ENCODE measurements at regions of chr6 and their contacts with region 1.

Region 1: DNA sequence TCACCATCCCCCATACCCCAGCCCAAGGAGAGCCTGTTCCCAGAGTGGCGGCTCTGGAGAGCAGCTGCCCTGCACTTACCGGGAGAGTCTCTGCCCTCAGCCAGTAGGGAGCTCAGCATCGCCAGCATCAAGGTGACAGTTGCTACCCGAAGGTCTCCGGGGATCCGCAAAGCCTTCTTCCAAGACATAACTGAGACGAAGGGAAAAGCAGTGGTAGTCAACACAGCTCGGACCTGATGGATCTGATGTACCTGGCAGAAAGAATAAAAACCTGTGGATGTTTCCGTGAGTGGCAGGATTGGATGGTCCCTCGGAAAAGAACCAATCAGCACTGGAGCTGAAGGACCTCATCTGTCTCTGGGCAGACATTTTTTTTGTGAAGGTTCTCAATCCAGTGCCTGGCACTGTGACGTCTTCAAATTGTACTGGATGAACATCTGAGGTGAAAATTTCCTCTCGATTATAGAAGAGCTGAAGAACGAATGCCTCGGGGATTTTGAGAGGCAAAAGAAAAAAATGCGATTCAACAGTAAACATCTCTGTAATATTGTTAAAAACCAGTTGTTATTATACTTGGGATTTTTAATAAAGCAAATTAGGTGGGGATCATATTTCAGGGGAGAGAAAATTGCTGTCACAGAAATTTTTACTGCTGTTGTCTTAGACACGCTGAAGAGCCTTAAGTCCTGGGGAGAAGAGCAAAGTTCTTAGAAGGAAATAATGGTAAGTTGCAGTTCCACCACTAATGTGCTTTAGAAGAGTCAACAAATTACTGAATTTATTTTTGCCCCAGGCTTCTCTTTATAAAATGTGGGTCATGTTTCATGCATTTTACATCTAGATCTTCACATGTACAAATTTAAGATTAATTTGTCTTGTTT is at the start of gene HLA-DQB1:
- DNase-seq: peak; percentile 88
- H3K4me3 Mint-ChIP-seq: peak within 1 kb of the TSS; percentile 79
- H3K27ac Mint-ChIP-seq: peak within 1 kb of the TSS; percentile 69
- H3K4me1 Mint-ChIP-seq: peaks cover 39% of the 10 kb centered on the region
- H3K27me3 Mint-ChIP-seq: peaks cover 59% of the 10 kb centered on the region
- total RNA-seq, gene HLA-DQB1: 1.5 and 1.6 TPM in 2 replicates

Region 2: GRCh38 chr6:32255199-32256153 is 411.2 kb before region 1 on chr6:
- intact Hi-C with region 1: loop called (anchors 5 kb)
- DNase-seq: peak; percentile 85
- H3K4me3 Mint-ChIP-seq: peak overlapping the region; percentile 58
- H3K27ac Mint-ChIP-seq: peak overlapping the region; percentile 31
- H3K4me1 Mint-ChIP-seq: peaks cover 22% of the 10 kb centered on the region
- H3K27me3 Mint-ChIP-seq: peaks cover 49% of the 10 kb centered on the region

Region 3: GRCh38 chr6:32317541-32317940 is 349.1 kb before region 1 on chr6:
- intact Hi-C with region 1: no loop called
- DNase-seq: no peak
- H3K4me3 Mint-ChIP-seq: no peak overlapping the region
- H3K27ac Mint-ChIP-seq: no peak overlapping the region
- H3K4me1 Mint-ChIP-seq: no peaks in the 10 kb centered on the region
- H3K27me3 Mint-ChIP-seq: peaks cover 49% of the 10 kb centered on the region

Region 4: GRCh38 chr6:32558426-32559057 is 108.1 kb before region 1 on chr6:
- intact Hi-C with region 1: no loop called
- DNase-seq: no peak
- H3K4me3 Mint-ChIP-seq: no peak overlapping the region
- H3K27ac Mint-ChIP-seq: no peak overlapping the region
- H3K4me1 Mint-ChIP-seq: no peaks in the 10 kb centered on the region
- H3K27me3 Mint-ChIP-seq: peaks cover 21% of the 10 kb centered on the region

Region 5: GRCh38 chr6:32609731-32610640 is 56.7 kb before region 1 on chr6:
- intact Hi-C with region 1: loop called (anchors 10 kb)
- DNase-seq: peak; percentile 89
- H3K4me3 Mint-ChIP-seq: no peak overlapping the region
- H3K27ac Mint-ChIP-seq: no peak overlapping the region
- H3K4me1 Mint-ChIP-seq: peaks cover 7% of the 10 kb centered on the region
- H3K27me3 Mint-ChIP-seq: peaks cover 12% of the 10 kb centered on the region

Region 6: DNA sequence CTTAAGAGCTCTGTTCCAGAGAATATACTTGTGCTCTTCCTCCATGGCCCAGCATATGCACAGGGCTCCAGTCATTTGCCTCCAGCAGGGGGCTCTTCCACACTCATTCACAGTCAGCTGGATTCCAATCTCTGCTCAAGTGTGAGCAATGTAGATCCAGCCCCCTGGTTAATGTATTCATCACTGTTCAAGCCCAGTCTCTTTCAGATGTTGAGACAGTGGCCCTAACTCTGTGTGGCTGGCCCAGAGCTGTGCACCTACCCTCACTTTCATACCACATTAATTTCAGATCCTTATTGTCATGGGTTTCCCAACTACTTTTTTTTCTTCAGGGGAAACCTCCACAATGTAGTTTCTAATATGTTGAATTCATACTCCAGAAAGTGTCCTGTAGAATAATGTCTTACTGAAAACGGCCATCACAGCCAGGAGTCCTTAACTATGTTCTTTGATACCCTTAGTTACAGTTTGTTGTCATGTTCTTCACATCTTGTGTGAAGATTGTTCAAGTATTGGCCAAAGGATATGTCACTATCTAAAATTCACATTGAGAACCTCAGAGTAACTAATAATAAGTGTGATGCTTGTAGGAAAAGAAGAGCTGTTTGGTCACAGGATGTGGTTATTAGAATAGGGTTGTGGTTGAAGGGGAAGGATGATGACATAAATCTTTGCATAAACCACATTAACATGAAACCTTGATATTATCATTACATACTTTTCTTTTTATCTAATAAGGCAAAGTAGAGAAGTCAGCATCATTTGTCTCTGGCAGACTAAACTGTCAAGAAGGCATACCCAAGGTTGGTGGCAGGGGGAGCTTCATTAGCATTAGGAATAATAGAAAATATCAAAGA is 43.9 kb before region 1 on chr6:
- intact Hi-C with region 1: loop called (anchors 2 kb)
- DNase-seq: peak; percentile 78
- H3K4me3 Mint-ChIP-seq: peak overlapping the region; percentile 59
- H3K27ac Mint-ChIP-seq: peak overlapping the region; percentile 85
- H3K4me1 Mint-ChIP-seq: peaks cover 43% of the 10 kb centered on the region
- H3K27me3 Mint-ChIP-seq: no peaks in the 10 kb centered on the region

Region 7: DNA sequence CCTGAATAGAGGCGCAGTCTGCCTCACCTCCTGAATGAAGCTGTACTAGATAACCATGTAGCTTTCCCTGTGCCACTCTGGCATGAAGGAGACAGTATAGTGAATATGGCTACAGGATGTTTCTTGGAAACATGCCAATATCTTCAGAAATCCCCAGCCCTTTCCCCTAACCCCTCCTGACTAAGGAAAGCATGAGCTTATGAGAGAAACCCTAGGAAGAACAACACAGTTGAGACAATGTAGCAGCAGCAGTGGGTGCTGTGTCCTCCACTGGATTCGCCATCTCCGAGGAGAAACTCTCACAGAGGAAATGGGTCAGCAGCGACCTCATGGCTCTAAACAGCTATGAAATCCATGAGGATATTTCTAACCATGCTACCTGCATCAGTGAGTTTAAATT is 22.8 kb before region 1 on chr6:
- intact Hi-C with region 1: no loop called
- DNase-seq: no peak
- H3K4me3 Mint-ChIP-seq: no peak overlapping the region
- H3K27ac Mint-ChIP-seq: no peak overlapping the region
- H3K4me1 Mint-ChIP-seq: peaks cover 17% of the 10 kb centered on the region
- H3K27me3 Mint-ChIP-seq: peaks cover 29% of the 10 kb centered on the region

Region 8: GRCh38 chr6:32685603-32686002 is 18.9 kb after region 1 on chr6:
- intact Hi-C with region 1: loop called (anchors 1 kb)
- DNase-seq: peak; percentile 87
- H3K4me3 Mint-ChIP-seq: peak overlapping the region; percentile 38
- H3K27ac Mint-ChIP-seq: peak overlapping the region; percentile 27
- H3K4me1 Mint-ChIP-seq: peaks cover 23% of the 10 kb centered on the region
- H3K27me3 Mint-ChIP-seq: peaks cover 16% of the 10 kb centered on the region

Measured in activated CD4-positive, alpha-beta T cell treated with anti-CD3 and anti-CD28 coated beads, Interleukin-2, amount 10 ng/mL, durations not matched to agents 24 days and 14 days (primary cell).